Lower leg skin (tissue), 4 donors: ENCODE measurements at regions of chr13 and their contacts with region 1.

Region 1: DNA sequence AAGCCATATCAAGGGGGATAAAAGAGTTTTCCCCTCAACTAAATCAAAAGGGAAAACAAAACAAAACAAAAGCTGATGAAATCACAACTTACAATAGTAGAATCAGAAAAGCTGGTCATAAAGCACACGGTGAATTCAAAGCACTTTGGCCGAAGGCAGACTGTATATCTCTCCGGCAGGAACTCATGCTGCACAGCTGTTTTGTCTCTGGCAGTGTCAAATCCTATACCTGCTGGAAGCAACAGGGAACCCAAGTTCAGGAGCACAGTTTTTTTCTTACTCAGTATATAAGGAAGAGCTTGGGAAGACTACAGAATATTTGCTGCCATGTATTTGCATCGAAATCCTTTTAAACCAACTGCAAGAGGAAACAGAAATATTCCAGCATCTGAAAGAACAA is 213.7 kb downstream of the RFC3 start:
- DNase-seq: no peak
- H3K4me3 ChIP-seq: no peak overlapping the region
- CTCF ChIP-seq: no peak
- POLR2A ChIP-seq: no peak

Region 2: GRCh38 chr13:33697936-33698335 is 333.7 kb before region 1 on chr13:
- intact Hi-C with region 1: no loop called
- DNase-seq: no peak
- H3K4me3 ChIP-seq: no peak overlapping the region
- CTCF ChIP-seq: no peak
- POLR2A ChIP-seq: no peak

Region 3: DNA sequence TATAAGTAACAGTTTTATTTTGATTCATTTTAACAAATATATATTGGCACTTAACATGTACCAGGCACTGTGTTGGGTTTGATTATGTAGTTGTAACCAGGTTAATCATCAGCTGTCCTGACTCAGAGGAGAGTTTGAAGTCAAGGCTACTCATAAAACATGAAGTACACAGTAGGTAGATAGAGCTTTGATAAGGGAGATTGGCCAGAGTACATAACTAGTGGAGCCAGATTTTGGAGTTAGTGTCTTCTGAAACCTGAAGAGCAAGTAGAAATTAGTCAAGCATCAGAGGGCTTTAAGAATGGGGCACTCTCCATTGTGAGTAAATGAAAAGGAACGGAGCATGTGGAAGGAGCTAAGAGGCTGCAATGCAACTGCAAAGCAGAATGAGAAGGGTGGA is 120.3 kb after region 1 on chr13:
- intact Hi-C with region 1: loop called (anchors 2 kb)
- DNase-seq: no peak
- H3K4me3 ChIP-seq: no peak overlapping the region
- CTCF ChIP-seq: no peak
- POLR2A ChIP-seq: no peak